ENCODE measurements at regions of chr13 and their contacts with region 1.

Region 1: DNA sequence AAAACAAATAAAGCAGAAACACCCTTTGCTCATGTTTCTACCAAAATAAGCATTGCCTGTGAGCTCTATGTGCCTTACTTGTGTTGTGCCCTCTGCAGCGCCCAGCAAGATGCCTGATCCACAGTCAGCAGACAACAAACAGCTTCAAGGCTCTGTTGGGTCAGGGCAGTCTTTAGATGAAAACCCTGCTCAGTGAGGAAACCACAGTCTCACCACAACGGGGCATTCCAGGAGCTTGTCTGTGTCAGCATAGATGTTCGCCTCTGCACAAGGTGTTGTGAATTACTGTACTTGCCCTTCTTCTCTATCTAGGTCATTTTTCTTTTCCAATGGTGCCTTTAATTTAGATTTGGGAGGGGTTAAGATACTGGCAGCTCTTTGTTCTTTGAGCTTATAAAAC is 251.9 kb downstream of the COL4A1 start:
- DNase-seq: no peak
- H3K4me3 ChIP-seq: no peak overlapping the region
- H3K27ac ChIP-seq: no peak overlapping the region
- H3K4me1 ChIP-seq: peaks cover 0 to 12% of the 10 kb centered on the region in 2 donors
- H3K27me3 ChIP-seq: no peaks in the 10 kb centered on the region
- CTCF ChIP-seq: no peak

Region 2: GRCh38 chr13:110023729-110024644 is 31.1 kb before region 1 on chr13:
- intact Hi-C with region 1: loop called (anchors 5 kb)
- DNase-seq: peak; percentile 30 to 82
- H3K4me3 ChIP-seq: peak overlapping the region in 1 of 2 donors; percentile 34
- H3K27ac ChIP-seq: peak overlapping the region; percentile 84
- H3K4me1 ChIP-seq: peaks cover 10 to 23% of the 10 kb centered on the region in 2 donors
- H3K27me3 ChIP-seq: no peaks in the 10 kb centered on the region
- CTCF ChIP-seq: no peak

Region 3: GRCh38 chr13:110138010-110138699 is 83.1 kb after region 1 on chr13:
- intact Hi-C with region 1: loop called (anchors 5 kb)
- DNase-seq: peak in 1 of 2 donors; percentile 94
- H3K4me3 ChIP-seq: peak overlapping the region; percentile 49 to 70
- H3K27ac ChIP-seq: peak overlapping the region; percentile 58 to 74
- H3K4me1 ChIP-seq: peaks cover 0 to 2% of the 10 kb centered on the region in 2 donors
- H3K27me3 ChIP-seq: no peaks in the 10 kb centered on the region
- CTCF ChIP-seq: no peak

Region 4: GRCh38 chr13:110312339-110313031 is 257.4 kb after region 1 on chr13:
- intact Hi-C with region 1: no loop called
- DNase-seq: peak in 1 of 2 donors; percentile 83
- H3K4me3 ChIP-seq: peak overlapping the region; percentile 84
- H3K27ac ChIP-seq: peak overlapping the region; percentile 95 to 99
- H3K4me1 ChIP-seq: peaks cover 17 to 57% of the 10 kb centered on the region in 2 donors
- H3K27me3 ChIP-seq: no peaks in the 10 kb centered on the region
- CTCF ChIP-seq: no peak